ENCODE measurements at regions of chr6 and their contacts with region 1.

Region 1: DNA sequence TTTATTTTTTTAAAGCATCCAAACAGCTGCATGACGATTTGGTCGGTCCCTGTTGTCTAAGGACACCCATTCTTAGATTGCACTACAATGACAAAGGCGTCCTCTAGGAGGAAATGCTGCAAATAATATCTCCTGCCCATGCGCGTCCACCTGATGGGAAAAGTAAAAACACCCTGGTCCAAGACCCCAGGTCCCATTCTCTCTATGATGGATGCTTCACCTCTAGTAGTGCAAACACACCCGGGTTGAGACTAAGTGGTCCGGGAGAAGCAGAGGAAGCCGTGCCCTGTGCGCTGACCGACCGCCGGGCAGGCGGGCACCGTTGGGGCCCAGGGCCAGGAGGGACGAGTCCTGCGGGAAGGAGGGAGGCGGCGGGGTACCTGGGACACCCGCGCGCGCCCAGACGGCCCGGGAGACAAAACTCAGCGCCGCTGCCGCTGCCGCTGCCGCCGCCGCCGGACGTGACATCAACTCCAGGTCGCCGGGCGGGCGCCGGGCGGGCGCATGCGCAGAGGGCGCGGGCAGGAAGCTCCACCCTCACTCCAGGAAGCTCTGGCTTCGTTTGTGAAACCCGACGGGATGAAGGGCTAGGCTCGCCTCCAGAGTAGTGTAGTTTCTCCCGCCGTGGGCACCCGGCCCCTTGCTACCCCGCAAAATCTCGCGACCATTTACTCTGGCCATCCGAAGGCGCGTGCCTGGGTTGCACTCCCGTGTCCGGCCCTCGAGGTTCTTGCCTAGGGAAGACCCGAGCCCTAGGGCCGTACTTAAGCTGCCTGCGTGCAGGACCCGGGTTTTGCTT is at the start of gene TBC1D7:
- DNase-seq: peak; percentile 89 to 97 (median 93)
- ATAC-seq: peak; percentile 92
- H3K4me3 ChIP-seq: peak within 1 kb of the TSS; percentile 99
- H3K4me3 Mint-ChIP-seq: peak within 1 kb of the TSS; percentile 83 to 96 (median 91)
- H3K27ac ChIP-seq: peak within 1 kb of the TSS; percentile 97
- H3K27ac Mint-ChIP-seq: peak within 1 kb of the TSS; percentile 94 to 99 (median 97)
- H3K4me1 ChIP-seq: peaks cover 5 to 15% of the 10 kb centered on the region in 2 donors
- H3K4me1 Mint-ChIP-seq: peaks cover 5 to 34% (median 31%) of the 10 kb centered on the region in 7 donors
- H3K27me3 ChIP-seq: no peaks in the 10 kb centered on the region
- H3K27me3 Mint-ChIP-seq: no peaks in the 10 kb centered on the region
- total RNA-seq, gene TBC1D7: 14.8 to 34.6 (median 17.0) TPM

Region 2: GRCh38 chr6:11653028-11653583 is 1675.2 kb before region 1 on chr6:
- CTCF ChIA-PET with region 1: no interaction called
- POLR2A ChIA-PET with region 1: no interaction called
- intact Hi-C with region 1: loop called in 1 of 2 experiments (anchors 5 kb)
- DNase-seq: peak in 5 of 9 donors; percentile 3 to 48 (median 9)
- ATAC-seq: peak; percentile 49
- H3K4me3 ChIP-seq: no peak overlapping the region
- H3K4me3 Mint-ChIP-seq: peak overlapping the region in 1 of 10 donors; percentile 3
- H3K27ac ChIP-seq: no peak overlapping the region
- H3K27ac Mint-ChIP-seq: peak overlapping the region in 4 of 9 donors; percentile 8 to 70 (median 24)
- H3K4me1 ChIP-seq: peaks cover 0 to 4% of the 10 kb centered on the region in 2 donors
- H3K4me1 Mint-ChIP-seq: peaks cover 0 to 19% (median 5%) of the 10 kb centered on the region in 7 donors
- H3K27me3 ChIP-seq: no peaks in the 10 kb centered on the region
- H3K27me3 Mint-ChIP-seq: peaks cover 0 to 4% (median 0%) of the 10 kb centered on the region in 5 donors

Region 3: GRCh38 chr6:13194852-13195251 is 133.4 kb before region 1 on chr6:
- CTCF ChIA-PET with region 1: no interaction called
- POLR2A ChIA-PET with region 1: no interaction called
- intact Hi-C with region 1: loop called in 1 of 2 experiments (anchors 1 kb)
- DNase-seq: no peak
- ATAC-seq: peak; percentile 41
- H3K4me3 ChIP-seq: no peak overlapping the region
- H3K4me3 Mint-ChIP-seq: no peak overlapping the region
- H3K27ac ChIP-seq: no peak overlapping the region
- H3K27ac Mint-ChIP-seq: no peak overlapping the region
- H3K4me1 ChIP-seq: no peaks in the 10 kb centered on the region
- H3K4me1 Mint-ChIP-seq: no peaks in the 10 kb centered on the region
- H3K27me3 ChIP-seq: no peaks in the 10 kb centered on the region
- H3K27me3 Mint-ChIP-seq: peaks cover 0 to 21% (median 15%) of the 10 kb centered on the region in 5 donors

Region 4: DNA sequence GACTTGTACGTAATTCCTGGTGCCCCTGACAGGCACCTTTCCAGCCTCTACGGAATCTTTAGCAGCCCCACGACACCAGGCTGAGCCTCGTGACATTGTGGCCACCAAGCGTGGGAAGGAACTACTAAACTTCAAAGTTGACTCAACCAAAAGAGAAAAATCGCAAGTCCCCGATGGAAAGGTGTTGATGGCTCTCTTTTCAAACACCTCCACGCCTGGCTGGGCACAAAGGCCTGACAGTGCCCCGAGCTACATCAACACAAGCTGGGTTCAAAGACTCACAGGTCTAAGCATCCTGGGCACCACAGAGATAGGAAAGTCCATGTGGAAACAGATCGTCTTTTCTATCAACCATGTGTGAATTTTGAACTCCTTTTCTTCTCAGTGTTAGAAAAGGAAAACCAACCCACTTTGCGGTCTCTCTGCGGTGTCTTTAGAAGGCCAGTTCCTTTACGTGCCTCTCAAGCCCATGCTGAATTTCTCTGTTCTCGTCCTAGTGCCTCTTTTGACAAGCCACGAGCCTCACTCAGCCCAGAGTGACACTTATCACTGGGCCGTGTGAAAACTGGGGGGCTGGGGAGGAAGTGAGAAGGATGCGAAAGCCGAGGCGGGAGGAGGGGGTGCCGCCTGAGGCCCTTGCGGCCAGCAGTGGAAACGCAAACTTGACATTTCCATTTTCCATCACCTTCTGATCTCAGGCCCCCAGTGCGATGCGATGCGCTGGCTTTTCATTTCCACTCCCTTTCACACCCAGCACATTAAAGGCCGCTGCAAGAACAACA is 99.7 kb after region 1 on chr6:
- CTCF ChIA-PET with region 1: interaction called, 3 read pairs
- POLR2A ChIA-PET with region 1: no interaction called
- intact Hi-C with region 1: loop called in 1 of 2 experiments (anchors 1 kb)
- DNase-seq: peak; percentile 29 to 76 (median 52)
- ATAC-seq: peak; percentile 86
- H3K4me3 ChIP-seq: peak overlapping the region; percentile 40
- H3K4me3 Mint-ChIP-seq: peak overlapping the region; percentile 62 to 92 (median 80)
- H3K27ac ChIP-seq: peak overlapping the region; percentile 9
- H3K27ac Mint-ChIP-seq: peak overlapping the region; percentile 1 to 85 (median 79)
- H3K4me1 ChIP-seq: peaks cover 26 to 55% of the 10 kb centered on the region in 2 donors
- H3K4me1 Mint-ChIP-seq: peaks cover 21 to 78% (median 49%) of the 10 kb centered on the region in 7 donors
- H3K27me3 ChIP-seq: no peaks in the 10 kb centered on the region
- H3K27me3 Mint-ChIP-seq: peaks cover 0 to 2% (median 0%) of the 10 kb centered on the region in 5 donors

Region 5: DNA sequence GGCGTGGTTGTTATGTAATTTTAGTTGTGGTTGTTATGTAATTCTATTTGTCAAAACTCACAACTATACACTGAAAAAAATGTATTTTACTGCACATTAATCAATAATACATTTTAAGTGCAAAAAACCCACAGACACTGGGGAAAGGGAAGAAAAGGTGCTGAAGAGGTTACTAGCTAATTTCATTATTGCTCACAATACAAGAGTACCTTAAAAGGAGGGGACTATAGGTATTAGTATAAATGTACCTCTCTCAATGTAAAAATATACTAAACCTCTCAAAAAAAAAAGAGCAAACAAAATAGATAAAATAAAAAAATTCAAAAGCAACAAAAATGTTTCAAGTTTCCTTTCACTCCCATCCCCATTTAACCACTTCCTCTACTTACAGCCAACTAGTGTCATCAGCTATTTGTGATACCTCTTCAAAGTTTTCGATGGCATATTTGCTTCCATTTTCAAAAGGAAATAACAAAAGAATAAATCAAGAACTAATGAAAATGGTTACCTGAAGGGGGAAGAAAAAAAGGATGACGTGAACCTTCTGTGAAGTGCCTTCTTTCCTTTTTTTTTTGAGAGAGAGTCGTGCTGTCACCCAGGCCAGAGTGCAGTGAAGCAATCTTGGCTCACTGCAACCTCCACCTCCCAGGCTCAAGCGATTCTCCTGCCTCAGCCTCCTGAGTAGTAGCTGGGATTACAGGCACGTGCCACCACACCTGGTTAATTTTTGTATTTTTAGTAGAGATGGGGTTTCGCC is 353.2 kb after region 1 on chr6:
- CTCF ChIA-PET with region 1: no interaction called
- POLR2A ChIA-PET with region 1: no interaction called
- intact Hi-C with region 1: loop called in 1 of 2 experiments (anchors 5 kb)
- DNase-seq: peak in 7 of 9 donors; percentile 41 to 78 (median 65)
- ATAC-seq: peak; percentile 82
- H3K4me3 ChIP-seq: peak overlapping the region; percentile 4
- H3K4me3 Mint-ChIP-seq: peak overlapping the region; percentile 38 to 75 (median 58)
- H3K27ac ChIP-seq: peak overlapping the region; percentile 54
- H3K27ac Mint-ChIP-seq: peak overlapping the region; percentile 63 to 92 (median 86)
- H3K4me1 ChIP-seq: peaks cover 36 to 42% of the 10 kb centered on the region in 2 donors
- H3K4me1 Mint-ChIP-seq: peaks cover 34 to 74% (median 65%) of the 10 kb centered on the region in 7 donors
- H3K27me3 ChIP-seq: no peaks in the 10 kb centered on the region
- H3K27me3 Mint-ChIP-seq: no peaks in the 10 kb centered on the region

Region 6: DNA sequence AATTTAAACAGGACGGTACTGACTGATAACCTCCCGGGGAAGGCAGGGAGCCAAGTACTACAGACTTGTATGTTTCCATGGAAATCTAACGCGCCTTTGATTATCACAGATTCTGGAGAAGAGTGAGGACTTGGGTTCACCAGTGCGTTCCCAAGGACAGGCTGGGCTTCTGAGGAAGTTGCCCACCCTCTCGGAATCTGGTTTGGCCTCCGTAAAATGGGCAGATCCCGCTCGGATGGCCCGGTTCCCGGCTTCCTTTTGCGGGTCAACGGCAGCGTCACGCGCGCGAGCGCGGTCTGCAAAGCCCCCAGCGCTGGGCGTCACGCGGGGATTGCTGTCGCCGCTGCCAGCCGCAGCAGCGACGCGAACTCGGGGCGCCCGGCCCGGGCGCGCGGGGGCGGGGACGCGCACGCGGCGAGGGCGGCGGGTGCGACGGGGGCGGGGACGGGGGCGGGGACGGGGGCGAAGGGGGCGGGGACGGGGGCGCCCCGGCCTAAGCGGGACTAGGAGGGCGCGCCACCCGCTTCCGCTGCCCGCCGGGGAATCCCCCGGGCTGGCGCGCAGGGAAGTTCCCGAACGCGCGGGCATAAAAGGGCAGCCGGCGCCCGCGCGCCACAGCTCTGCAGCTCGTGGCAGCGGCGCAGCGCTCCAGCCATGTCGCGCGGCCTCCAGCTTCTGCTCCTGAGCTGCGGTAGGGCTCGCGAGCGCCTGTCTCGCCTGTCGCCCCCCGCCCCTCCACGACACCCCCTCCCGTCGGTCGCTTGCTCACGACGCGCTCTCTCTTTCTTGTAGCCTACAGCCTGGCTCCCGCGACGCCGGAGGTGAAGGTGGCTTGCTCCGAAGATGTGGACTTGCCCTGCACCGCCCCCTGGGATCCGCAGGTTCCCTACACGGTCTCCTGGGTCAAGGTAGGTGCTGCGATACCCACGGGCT is 789.1 kb after region 1 on chr6 and contains the start of gene CD83:
- CTCF ChIA-PET with region 1: interaction called, 3 read pairs
- POLR2A ChIA-PET with region 1: no interaction called
- intact Hi-C with region 1: loop called in 1 of 2 experiments (anchors 1 kb)
- DNase-seq: peak; percentile 79 to 89 (median 84)
- ATAC-seq: peak; percentile 94
- H3K4me3 ChIP-seq: peak within 1 kb of the TSS; percentile 91
- H3K4me3 Mint-ChIP-seq: peak within 1 kb of the TSS; percentile 87 to 97 (median 93)
- H3K27ac ChIP-seq: peak within 1 kb of the TSS; percentile 87
- H3K27ac Mint-ChIP-seq: peak within 1 kb of the TSS; percentile 91 to 96 (median 94)
- H3K4me1 ChIP-seq: peaks cover 11 to 15% of the 10 kb centered on the region in 2 donors
- H3K4me1 Mint-ChIP-seq: peaks cover 18 to 41% (median 28%) of the 10 kb centered on the region in 7 donors
- H3K27me3 ChIP-seq: no peaks in the 10 kb centered on the region
- H3K27me3 Mint-ChIP-seq: peaks cover 0 to 35% (median 0%) of the 10 kb centered on the region in 5 donors
- total RNA-seq, gene CD83: 5.0 to 113 (median 18.3) TPM

Measured in naive thymus-derived CD4-positive, alpha-beta T cell (primary cell).